ENCODE measurements at regions of chr15 and their contacts with region 1.

Region 1: GRCh38 chr15:42137431-42138261 is 18.8 kb downstream of the PLA2G4F start:
- DNase-seq: no peak
- H3K4me3 ChIP-seq: no peak overlapping the region
- H3K27ac ChIP-seq: no peak overlapping the region
- H3K4me1 ChIP-seq: peaks cover 0 to 9% (median 0%) of the 10 kb centered on the region in 3 donors
- H3K27me3 ChIP-seq: no peaks in the 10 kb centered on the region
- CTCF ChIP-seq: peak; percentile 21 to 72 (median 52)
- POLR2A ChIP-seq: no peak

Region 2: GRCh38 chr15:41989259-41989933 is 148.2 kb before region 1 on chr15:
- intact Hi-C with region 1: loop called (anchors 10 kb)
- DNase-seq: peak; percentile 7
- H3K4me3 ChIP-seq: no peak overlapping the region
- H3K27ac ChIP-seq: no peak overlapping the region
- H3K4me1 ChIP-seq: peaks cover 0 to 10% (median 0%) of the 10 kb centered on the region in 3 donors
- H3K27me3 ChIP-seq: peaks cover 0 to 8% (median 0%) of the 10 kb centered on the region in 4 donors
- CTCF ChIP-seq: peak; percentile 95 to 99 (median 98)
- POLR2A ChIP-seq: no peak

Region 3: GRCh38 chr15:42065033-42065432 is 72.6 kb before region 1 on chr15:
- intact Hi-C with region 1: loop called (anchors 5 kb)
- DNase-seq: no peak
- H3K4me3 ChIP-seq: no peak overlapping the region
- H3K27ac ChIP-seq: no peak overlapping the region
- H3K4me1 ChIP-seq: peaks cover 0 to 14% (median 0%) of the 10 kb centered on the region in 3 donors
- H3K27me3 ChIP-seq: peaks cover 0 to 24% (median 0%) of the 10 kb centered on the region in 4 donors
- CTCF ChIP-seq: no peak
- POLR2A ChIP-seq: no peak

Region 4: DNA sequence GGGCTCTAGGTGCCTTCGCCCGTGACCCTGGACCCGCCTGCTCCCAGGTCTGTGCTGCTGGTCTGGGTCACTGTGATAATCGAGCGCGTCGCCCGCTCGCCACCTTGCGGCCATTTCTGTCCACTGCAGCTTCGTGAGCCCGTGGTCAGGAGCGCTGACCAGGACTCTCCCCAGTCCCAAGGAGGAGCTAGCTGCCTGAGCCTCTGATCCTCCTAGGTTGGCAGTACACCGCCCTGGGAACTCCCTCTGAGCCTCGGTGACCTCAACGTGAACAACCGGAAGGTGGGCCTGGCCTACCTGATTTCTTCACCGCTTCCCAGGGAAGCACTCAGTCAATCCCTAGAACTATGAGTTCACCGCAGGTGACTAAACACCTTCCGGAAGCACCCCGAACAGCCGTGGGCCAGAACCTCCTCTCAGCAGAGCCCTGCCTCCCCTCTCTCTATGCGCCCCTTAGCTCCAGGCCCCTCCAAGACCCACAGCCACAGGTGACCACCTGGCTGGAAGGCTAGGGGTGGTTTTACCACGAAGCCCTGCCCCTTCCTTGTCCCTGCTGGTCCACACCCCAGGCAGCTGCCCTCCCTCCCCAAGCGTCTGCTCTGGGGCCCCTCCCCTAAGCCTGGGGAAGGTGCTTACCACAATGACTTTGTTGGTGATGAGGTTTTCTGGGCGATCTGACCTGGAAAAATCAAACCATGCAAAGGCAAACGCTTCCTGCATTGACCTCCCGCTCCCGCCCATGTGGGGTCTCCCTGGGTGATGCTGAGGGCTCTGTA is 53.0 kb before region 1 on chr15:
- intact Hi-C with region 1: loop called (anchors 5 kb)
- DNase-seq: no peak
- H3K4me3 ChIP-seq: peak overlapping the region in 2 of 4 donors; percentile 13 to 30
- H3K27ac ChIP-seq: peak overlapping the region; percentile 22 to 64 (median 52)
- H3K4me1 ChIP-seq: peaks cover 4 to 24% (median 11%) of the 10 kb centered on the region in 3 donors
- H3K27me3 ChIP-seq: peaks cover 0 to 50% (median 0%) of the 10 kb centered on the region in 4 donors
- CTCF ChIP-seq: peak; percentile 69 to 95 (median 89)
- POLR2A ChIP-seq: no peak